ENCODE measurements at regions of chr10 and their contacts with region 1.

Region 1: GRCh38 chr10:55704944-55705343 is 656.1 kb downstream of the ZWINT start:
- DNase-seq: no peak
- ATAC-seq: no peak
- H3K4me3 ChIP-seq: no peak overlapping the region
- H3K27ac ChIP-seq: no peak overlapping the region
- H3K4me1 ChIP-seq: no peaks in the 10 kb centered on the region
- H3K27me3 ChIP-seq: no peaks in the 10 kb centered on the region
- CTCF ChIP-seq: no peak

Region 2: GRCh38 chr10:55668326-55668922 is 36.5 kb before region 1 on chr10:
- intact Hi-C with region 1: loop called in 1 of 2 experiments (anchors 2 kb)
- DNase-seq: no peak
- ATAC-seq: no peak
- H3K4me3 ChIP-seq: no peak overlapping the region
- H3K27ac ChIP-seq: no peak overlapping the region
- H3K4me1 ChIP-seq: no peaks in the 10 kb centered on the region
- H3K27me3 ChIP-seq: no peaks in the 10 kb centered on the region
- CTCF ChIP-seq: no peak

Region 3: DNA sequence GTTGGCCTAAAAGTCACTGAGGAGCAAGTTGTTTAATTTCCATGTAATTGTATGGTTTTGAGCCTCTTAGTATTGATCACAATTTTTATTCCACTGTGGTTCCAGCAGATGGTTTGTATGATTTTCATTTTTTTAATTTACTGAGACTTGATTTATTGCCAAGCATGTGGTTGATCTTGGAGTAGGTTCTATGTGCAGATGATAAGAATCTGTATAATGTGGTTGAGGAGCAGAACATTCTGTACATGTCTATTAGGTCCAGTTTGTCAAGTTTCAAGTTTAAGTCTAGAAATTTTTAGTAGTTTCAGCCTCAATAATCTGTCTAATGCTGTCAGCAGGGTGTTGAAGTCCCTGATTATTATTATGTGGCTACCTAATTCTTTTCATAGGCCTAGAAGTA is 678.9 kb after region 1 on chr10:
- intact Hi-C with region 1: no loop called
- DNase-seq: no peak
- ATAC-seq: no peak
- H3K4me3 ChIP-seq: no peak overlapping the region
- H3K27ac ChIP-seq: no peak overlapping the region
- H3K4me1 ChIP-seq: no peaks in the 10 kb centered on the region
- H3K27me3 ChIP-seq: peaks cover 0 to 2% (median 0%) of the 10 kb centered on the region in 3 donors
- CTCF ChIP-seq: no peak